CD4-positive, alpha-beta memory T cell (primary cell): ENCODE measurements at regions of chr7 and their contacts with region 1.

Region 1: DNA sequence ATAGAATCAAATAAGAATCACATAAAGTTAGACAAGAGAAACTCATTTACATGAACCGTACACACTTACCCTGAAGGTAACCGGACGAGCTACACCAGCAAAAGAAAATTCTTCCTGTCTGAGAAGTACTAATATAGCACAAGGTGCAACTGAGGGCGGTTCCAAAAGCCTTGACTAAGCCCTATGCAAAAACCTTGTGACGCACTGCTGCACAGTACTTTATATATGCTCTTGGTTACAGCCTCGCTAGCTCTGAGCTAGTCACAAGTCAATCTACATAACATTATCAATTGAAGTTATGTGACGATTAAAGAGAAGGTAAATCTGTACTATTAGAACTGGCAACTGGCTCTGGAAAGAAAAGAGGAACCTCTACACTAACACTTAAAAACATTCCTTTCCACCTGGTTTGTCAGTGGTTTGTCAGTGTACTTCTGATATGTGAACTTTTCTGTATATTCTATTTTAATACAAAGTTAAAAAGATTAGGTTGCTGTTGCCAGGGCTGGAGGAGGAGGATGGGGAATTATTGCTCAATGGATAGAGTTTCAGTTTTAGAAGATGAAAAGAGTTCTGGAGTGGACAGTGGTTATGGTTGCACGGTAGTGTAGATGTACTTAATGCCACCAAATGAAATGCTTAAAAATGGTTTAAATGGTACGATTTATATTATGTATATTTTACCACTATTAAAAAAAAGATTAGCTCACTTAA is 21.6 kb downstream of the NT5C3A start:
- DNase-seq: peak; percentile 70 to 90 (median 81)
- H3K4me3 ChIP-seq: peak overlapping the region; percentile 6 to 52
- H3K4me3 Mint-ChIP-seq: peak overlapping the region; percentile 75 to 92 (median 84)
- H3K27ac ChIP-seq: peak overlapping the region; percentile 64
- H3K27ac Mint-ChIP-seq: peak overlapping the region; percentile 88 to 97 (median 94)
- H3K4me1 ChIP-seq: peaks cover 72% of the 10 kb centered on the region
- H3K4me1 Mint-ChIP-seq: peaks cover 34 to 71% (median 53%) of the 10 kb centered on the region in 4 donors
- H3K27me3 ChIP-seq: no peaks in the 10 kb centered on the region
- H3K27me3 Mint-ChIP-seq: no peaks in the 10 kb centered on the region

Region 2: GRCh38 chr7:33128990-33129805 is 88.2 kb after region 1 on chr7 and contains the start of gene BBS9:
- CTCF ChIA-PET with region 1: no interaction called
- POLR2A ChIA-PET with region 1: no interaction called
- intact Hi-C with region 1: loop called (anchors 1 kb)
- DNase-seq: peak; percentile 89 to 93 (median 90)
- H3K4me3 ChIP-seq: peak within 1 kb of the TSS; percentile 74 to 81
- H3K4me3 Mint-ChIP-seq: peak within 1 kb of the TSS; percentile 96 to 98 (median 97)
- H3K27ac ChIP-seq: peak within 1 kb of the TSS; percentile 66
- H3K27ac Mint-ChIP-seq: peak within 1 kb of the TSS; percentile 88 to 97 (median 96)
- H3K4me1 ChIP-seq: peaks cover 15% of the 10 kb centered on the region
- H3K4me1 Mint-ChIP-seq: peaks cover 14 to 27% (median 15%) of the 10 kb centered on the region in 4 donors
- H3K27me3 ChIP-seq: no peaks in the 10 kb centered on the region
- H3K27me3 Mint-ChIP-seq: peaks cover 0 to 4% of the 10 kb centered on the region in 2 donors
- total RNA-seq, gene BBS9: 27.0 to 27.3 TPM